ENCODE measurements at regions of chr10 and their contacts with region 1.

Region 1: GRCh38 chr10:123835575-123835974 is 56.0 kb downstream of the CPXM2 start:
- DNase-seq: peak; percentile 61
- ATAC-seq: peak; percentile 95
- H3K4me3 ChIP-seq: no peak overlapping the region
- H3K27ac ChIP-seq: no peak overlapping the region
- H3K4me1 ChIP-seq: peaks cover 11% of the 10 kb centered on the region
- H3K27me3 ChIP-seq: no peaks in the 10 kb centered on the region
- CTCF ChIP-seq: no peak
- EP300 ChIP-seq: peak; percentile 71 to 79; a peak in 3 of 4 replicates
- POLR2A ChIP-seq: no peak
- RAD21 ChIP-seq: 0 out of 2 replicates have a peak, but pooled peaks have one; percentile 5

Region 2: DNA sequence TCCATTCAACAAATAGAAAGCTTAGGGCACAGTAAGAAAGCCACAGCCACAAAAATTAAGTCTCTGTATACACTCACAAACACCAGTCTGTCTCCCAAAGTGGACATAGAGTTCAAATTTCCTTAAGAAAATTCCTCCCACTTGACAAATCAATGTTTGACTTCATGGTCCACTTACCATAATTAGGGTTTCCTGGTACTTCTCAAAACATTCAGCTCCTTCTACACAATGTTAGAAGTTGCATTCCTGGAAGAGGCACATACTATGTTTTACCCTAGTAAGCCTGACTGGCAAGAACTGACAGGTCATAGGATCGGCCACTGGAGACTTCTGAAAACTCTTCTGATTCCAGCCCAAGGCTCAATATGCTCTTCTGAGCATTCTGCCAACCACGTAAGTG is 14.4 kb before region 1 on chr10:
- CTCF ChIA-PET with region 1: interaction called, 9 read pairs
- POLR2A ChIA-PET with region 1: no interaction called
- RAD21 ChIA-PET with region 1: interaction called, 10 read pairs
- SMC1A ChIA-PET with region 1: interaction called, 21 read pairs
- in situ Hi-C with region 1: no loop called
- intact Hi-C with region 1: no loop called
- DNase-seq: no peak
- ATAC-seq: no peak
- H3K4me3 ChIP-seq: no peak overlapping the region
- H3K27ac ChIP-seq: no peak overlapping the region
- H3K4me1 ChIP-seq: no peaks in the 10 kb centered on the region
- H3K27me3 ChIP-seq: peaks cover 0 to 4% of the 10 kb centered on the region in 2 experiments; a peak in 1 of 4 replicates
- CTCF ChIP-seq: no peak
- EP300 ChIP-seq: no peak
- POLR2A ChIP-seq: no peak
- RAD21 ChIP-seq: no peak

Region 3: GRCh38 chr10:123848564-123849457 is 13.2 kb after region 1 on chr10:
- CTCF ChIA-PET with region 1: interaction called, 13 read pairs
- POLR2A ChIA-PET with region 1: interaction called, 32 read pairs
- RAD21 ChIA-PET with region 1: interaction called, 77 read pairs
- SMC1A ChIA-PET with region 1: interaction called, 158 read pairs
- in situ Hi-C with region 1: no loop called
- intact Hi-C with region 1: no loop called
- DNase-seq: peak; percentile 63
- ATAC-seq: peak; percentile 86
- H3K4me3 ChIP-seq: no peak overlapping the region
- H3K27ac ChIP-seq: peak overlapping the region; percentile 39; the same call in 1 of the 2 replicates
- H3K4me1 ChIP-seq: peaks cover 3% of the 10 kb centered on the region; the same call in 1 of the 2 replicates
- H3K27me3 ChIP-seq: no peaks in the 10 kb centered on the region
- CTCF ChIP-seq: no peak
- EP300 ChIP-seq: peak; percentile 78 to 92
- POLR2A ChIP-seq: no peak
- RAD21 ChIP-seq: no peak

Region 4: DNA sequence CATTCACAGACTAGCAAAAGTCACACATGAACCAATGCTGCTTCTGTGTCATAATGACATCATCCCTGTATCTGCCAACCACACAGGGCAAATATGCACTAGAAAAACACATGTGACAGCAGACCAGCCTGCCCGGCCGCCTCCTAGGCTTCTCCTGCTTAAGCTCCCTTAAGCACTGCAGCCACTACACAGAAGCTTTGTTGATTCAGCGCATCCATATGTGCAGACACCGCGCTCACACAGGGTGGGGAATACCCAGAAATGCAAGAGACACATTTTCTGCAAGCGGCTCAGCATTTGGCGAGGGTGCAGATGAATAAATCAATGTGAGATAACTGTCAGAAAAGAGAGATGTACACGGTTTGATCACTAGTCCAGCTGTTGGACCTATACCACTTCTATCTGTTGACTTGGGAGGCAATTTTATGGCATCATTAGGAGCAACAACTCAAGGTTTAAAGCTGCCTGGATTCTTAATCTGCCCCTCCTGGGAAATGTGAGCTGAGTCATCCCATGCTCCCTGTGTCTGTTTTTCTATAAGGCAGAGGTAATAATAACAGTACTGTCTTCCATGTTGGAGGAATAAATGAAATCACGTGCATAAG is 22.6 kb after region 1 on chr10:
- CTCF ChIA-PET with region 1: interaction called, 8 read pairs
- POLR2A ChIA-PET with region 1: interaction called, 3 read pairs
- RAD21 ChIA-PET with region 1: interaction called, 10 read pairs
- SMC1A ChIA-PET with region 1: interaction called, 158 read pairs
- in situ Hi-C with region 1: no loop called
- intact Hi-C with region 1: no loop called
- DNase-seq: no peak
- ATAC-seq: peak; percentile 35
- H3K4me3 ChIP-seq: no peak overlapping the region
- H3K27ac ChIP-seq: no peak overlapping the region
- H3K4me1 ChIP-seq: 0 out of 2 replicates have a peak, but pooled peaks cover 5% of the 10 kb centered on the region
- H3K27me3 ChIP-seq: peaks cover 0 to 1% of the 10 kb centered on the region in 2 experiments; a peak in 2 of 4 replicates
- CTCF ChIP-seq: no peak
- EP300 ChIP-seq: no peak
- POLR2A ChIP-seq: no peak
- RAD21 ChIP-seq: no peak

Region 5: DNA sequence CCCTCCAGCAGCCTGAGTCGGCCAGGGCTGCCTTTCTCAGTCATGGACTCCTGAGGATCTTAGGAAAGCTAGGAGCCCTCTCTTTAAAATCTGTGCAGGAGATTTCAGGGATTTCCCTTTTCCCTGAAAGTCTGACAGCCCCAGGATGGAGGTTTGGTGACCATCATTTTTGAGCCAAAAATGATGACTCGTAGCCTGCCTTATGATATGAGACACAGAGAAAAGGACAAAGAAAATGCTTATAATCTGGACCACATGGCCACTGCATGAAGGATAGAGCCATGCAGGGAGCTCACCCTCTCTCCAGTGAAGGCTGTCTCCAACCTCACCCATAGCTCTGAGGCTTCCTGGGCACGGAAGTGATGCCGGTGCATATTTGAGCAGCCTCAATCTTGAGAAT is 364.4 kb after region 1 on chr10:
- CTCF ChIA-PET with region 1: no interaction called
- POLR2A ChIA-PET with region 1: no interaction called
- RAD21 ChIA-PET with region 1: no interaction called
- SMC1A ChIA-PET with region 1: no interaction called
- in situ Hi-C with region 1: no loop called
- intact Hi-C with region 1: no loop called
- DNase-seq: no peak
- ATAC-seq: no peak
- H3K4me3 ChIP-seq: no peak overlapping the region
- H3K27ac ChIP-seq: no peak overlapping the region
- H3K4me1 ChIP-seq: 0 out of 2 replicates have a peak, but pooled peaks cover 2% of the 10 kb centered on the region
- H3K27me3 ChIP-seq: no peaks in the 10 kb centered on the region
- CTCF ChIP-seq: no peak
- EP300 ChIP-seq: no peak
- POLR2A ChIP-seq: no peak
- RAD21 ChIP-seq: no peak

Measured in GM12878 (cell line).